Panc1 (cell line): ENCODE measurements at regions of chr6 and their contacts with region 1.

Region 1: DNA sequence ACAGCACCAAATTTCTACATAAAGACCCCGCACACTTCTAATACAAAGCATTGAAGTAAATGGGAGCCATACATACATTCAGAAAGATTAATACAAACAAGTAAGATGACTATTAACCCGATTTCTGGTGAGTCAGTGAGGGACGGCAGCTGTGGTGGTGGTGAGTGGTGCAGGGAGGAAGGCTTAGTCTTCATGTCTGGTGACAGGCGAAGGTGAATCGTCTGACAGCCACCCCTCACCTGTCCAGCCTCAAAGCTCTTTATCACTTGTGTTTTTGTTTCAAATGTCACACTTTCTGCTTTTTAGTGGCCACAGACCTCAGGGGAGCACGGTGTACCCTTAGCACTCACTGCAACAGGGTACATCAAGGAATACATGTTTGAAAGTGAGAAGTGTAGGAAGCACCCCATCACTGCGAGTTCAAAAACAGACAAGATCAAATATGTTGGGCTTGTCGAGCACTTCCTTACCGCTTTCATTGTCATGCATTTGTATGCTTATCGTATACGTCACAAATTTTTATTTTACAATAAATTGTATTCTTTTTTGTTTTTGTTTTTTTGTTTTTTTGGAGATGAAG is 63.5 kb downstream of the IRF4 start:
- DNase-seq: no peak
- ATAC-seq: no peak
- H3K4me3 ChIP-seq: no peak overlapping the region
- H3K27ac ChIP-seq: no peak overlapping the region
- H3K4me1 ChIP-seq: no peaks in the 10 kb centered on the region
- H3K27me3 ChIP-seq: peaks cover 9% of the 10 kb centered on the region
- CTCF ChIP-seq: no peak

Region 2: GRCh38 chr6:422433-423054 is 32.6 kb before region 1 on chr6:
- CTCF ChIA-PET with region 1: no interaction called
- POLR2A ChIA-PET with region 1: no interaction called
- in situ Hi-C with region 1: no loop called
- intact Hi-C with region 1: loop called (anchors 2 kb)
- DNase-seq: peak; percentile 92
- ATAC-seq: peak; percentile 95
- H3K4me3 ChIP-seq: no peak overlapping the region
- H3K27ac ChIP-seq: no peak overlapping the region
- H3K4me1 ChIP-seq: peaks cover 3% of the 10 kb centered on the region; the same call in 1 of the 2 replicates
- H3K27me3 ChIP-seq: no peaks in the 10 kb centered on the region
- CTCF ChIP-seq: no peak